ENCODE measurements at regions of chr11 and their contacts with region 1.

Region 1: DNA sequence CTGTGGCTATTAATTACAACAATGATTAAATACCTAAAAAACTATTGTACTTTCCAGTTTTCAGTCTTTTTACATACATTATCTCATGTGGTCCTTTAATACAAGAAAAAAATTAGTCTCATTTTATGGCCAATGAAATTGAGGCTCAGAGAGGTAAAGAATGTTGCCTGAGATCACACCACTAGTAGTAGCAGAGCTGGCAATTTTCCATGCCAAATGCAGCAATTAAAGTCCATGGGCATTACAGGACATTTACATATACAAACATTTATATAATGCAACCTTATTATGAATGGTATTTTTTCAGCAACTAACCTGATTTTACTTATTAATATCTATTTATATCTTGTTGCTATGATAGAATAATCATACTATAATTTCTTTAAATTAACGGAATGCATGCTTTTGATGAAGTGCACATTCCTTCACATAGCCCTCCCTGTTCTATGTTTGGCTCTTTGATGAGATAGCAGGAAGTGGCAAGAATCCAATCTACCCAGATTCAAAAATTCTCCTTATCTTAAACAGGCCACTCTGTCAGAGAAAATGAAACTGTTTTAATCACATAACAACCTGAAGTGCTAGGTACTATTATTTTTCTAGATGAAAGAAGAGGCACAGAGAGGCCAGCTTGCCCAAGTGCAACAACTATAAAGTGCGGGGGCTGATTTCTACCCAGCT is 120.9 kb upstream of the LDLRAD3 start:
- DNase-seq: no peak
- H3K4me3 ChIP-seq: no peak overlapping the region
- H3K4me3 Mint-ChIP-seq: no peak overlapping the region
- H3K27ac Mint-ChIP-seq: no peak overlapping the region
- H3K4me1 ChIP-seq: peaks cover 14% of the 10 kb centered on the region
- H3K4me1 Mint-ChIP-seq: peaks cover 15% of the 10 kb centered on the region
- H3K27me3 ChIP-seq: no peaks in the 10 kb centered on the region
- H3K27me3 Mint-ChIP-seq: no peaks in the 10 kb centered on the region
- CTCF ChIP-seq: no peak

Region 2: GRCh38 chr11:35617687-35618496 is 205.1 kb before region 1 on chr11 and contains the start of gene FJX1:
- CTCF ChIA-PET with region 1: interaction called, 22 read pairs
- POLR2A ChIA-PET with region 1: interaction called, 5 read pairs
- intact Hi-C with region 1: loop called (anchors 1 kb)
- DNase-seq: peak; percentile 69 to 71
- H3K4me3 ChIP-seq: peak within 1 kb of the TSS; percentile 61
- H3K4me3 Mint-ChIP-seq: peak within 1 kb of the TSS; percentile 81
- H3K27ac Mint-ChIP-seq: peak within 1 kb of the TSS; percentile 76
- H3K4me1 ChIP-seq: peaks cover 26% of the 10 kb centered on the region
- H3K4me1 Mint-ChIP-seq: peaks cover 20% of the 10 kb centered on the region
- H3K27me3 ChIP-seq: no peaks in the 10 kb centered on the region
- H3K27me3 Mint-ChIP-seq: peaks cover 2% of the 10 kb centered on the region
- CTCF ChIP-seq: no peak
- total RNA-seq, gene FJX1: 12.0 and 14.4 TPM in 2 replicates

Region 3: GRCh38 chr11:35725880-35726279 is 97.1 kb before region 1 on chr11:
- CTCF ChIA-PET with region 1: no interaction called
- POLR2A ChIA-PET with region 1: no interaction called
- intact Hi-C with region 1: no loop called
- DNase-seq: no peak
- H3K4me3 ChIP-seq: no peak overlapping the region
- H3K4me3 Mint-ChIP-seq: no peak overlapping the region
- H3K27ac Mint-ChIP-seq: no peak overlapping the region
- H3K4me1 ChIP-seq: peaks cover 13% of the 10 kb centered on the region
- H3K4me1 Mint-ChIP-seq: peaks cover 4% of the 10 kb centered on the region
- H3K27me3 ChIP-seq: no peaks in the 10 kb centered on the region
- H3K27me3 Mint-ChIP-seq: no peaks in the 10 kb centered on the region
- CTCF ChIP-seq: no peak

Region 4: DNA sequence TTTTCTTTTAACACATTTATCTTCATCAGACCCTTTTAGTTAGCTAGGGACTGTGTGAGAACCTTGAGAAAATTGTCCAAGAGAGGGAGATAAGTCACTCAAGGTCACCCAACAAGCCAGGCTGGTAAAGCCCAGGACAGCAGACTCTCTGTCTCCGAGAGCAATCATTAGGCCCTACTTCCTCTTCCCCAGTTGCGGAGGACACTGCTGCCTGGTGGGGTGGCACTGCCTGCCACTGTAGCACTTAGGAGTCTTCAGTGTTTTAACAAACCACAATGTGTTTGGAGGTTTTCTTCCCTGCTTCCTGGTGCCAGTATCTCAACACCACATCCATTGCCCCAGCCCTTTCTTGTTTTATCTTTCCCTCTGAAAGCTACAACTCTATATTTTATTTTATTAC is 11.2 kb before region 1 on chr11:
- CTCF ChIA-PET with region 1: interaction called, 19 read pairs
- POLR2A ChIA-PET with region 1: no interaction called
- intact Hi-C with region 1: no loop called
- DNase-seq: no peak
- H3K4me3 ChIP-seq: no peak overlapping the region
- H3K4me3 Mint-ChIP-seq: no peak overlapping the region
- H3K27ac Mint-ChIP-seq: peak overlapping the region; percentile 69
- H3K4me1 ChIP-seq: no peaks in the 10 kb centered on the region
- H3K4me1 Mint-ChIP-seq: no peaks in the 10 kb centered on the region
- H3K27me3 ChIP-seq: no peaks in the 10 kb centered on the region
- H3K27me3 Mint-ChIP-seq: no peaks in the 10 kb centered on the region
- CTCF ChIP-seq: no peak

Region 5: GRCh38 chr11:36056160-36056751 is 233.3 kb after region 1 on chr11:
- CTCF ChIA-PET with region 1: interaction called, 14 read pairs
- POLR2A ChIA-PET with region 1: no interaction called
- intact Hi-C with region 1: loop called (anchors 5 kb)
- DNase-seq: peak in 1 of 2 experiments; percentile 38
- H3K4me3 ChIP-seq: no peak overlapping the region
- H3K4me3 Mint-ChIP-seq: no peak overlapping the region
- H3K27ac Mint-ChIP-seq: no peak overlapping the region
- H3K4me1 ChIP-seq: no peaks in the 10 kb centered on the region
- H3K4me1 Mint-ChIP-seq: no peaks in the 10 kb centered on the region
- H3K27me3 ChIP-seq: no peaks in the 10 kb centered on the region
- H3K27me3 Mint-ChIP-seq: no peaks in the 10 kb centered on the region
- CTCF ChIP-seq: peak; percentile 26 to 70

Region 6: GRCh38 chr11:36079878-36080675 is 257.1 kb after region 1 on chr11:
- CTCF ChIA-PET with region 1: no interaction called
- POLR2A ChIA-PET with region 1: no interaction called
- intact Hi-C with region 1: no loop called
- DNase-seq: no peak
- H3K4me3 ChIP-seq: no peak overlapping the region
- H3K4me3 Mint-ChIP-seq: no peak overlapping the region
- H3K27ac Mint-ChIP-seq: no peak overlapping the region
- H3K4me1 ChIP-seq: peaks cover 4% of the 10 kb centered on the region; the same call in 1 of the 2 replicates
- H3K4me1 Mint-ChIP-seq: no peaks in the 10 kb centered on the region
- H3K27me3 ChIP-seq: no peaks in the 10 kb centered on the region
- H3K27me3 Mint-ChIP-seq: no peaks in the 10 kb centered on the region
- CTCF ChIP-seq: no peak

Region 7: GRCh38 chr11:36149538-36150242 is 326.7 kb after region 1 on chr11:
- CTCF ChIA-PET with region 1: interaction called, 10 read pairs
- POLR2A ChIA-PET with region 1: no interaction called
- intact Hi-C with region 1: loop called (anchors 1 kb)
- DNase-seq: peak; percentile 79 to 87
- H3K4me3 ChIP-seq: no peak overlapping the region
- H3K4me3 Mint-ChIP-seq: peak overlapping the region; percentile 2
- H3K27ac Mint-ChIP-seq: peak overlapping the region; percentile 89
- H3K4me1 ChIP-seq: peaks cover 30% of the 10 kb centered on the region
- H3K4me1 Mint-ChIP-seq: peaks cover 15% of the 10 kb centered on the region
- H3K27me3 ChIP-seq: no peaks in the 10 kb centered on the region
- H3K27me3 Mint-ChIP-seq: no peaks in the 10 kb centered on the region
- CTCF ChIP-seq: peak; percentile 36 to 58

Region 8: GRCh38 chr11:36478700-36479329 is 655.9 kb after region 1 on chr11:
- CTCF ChIA-PET with region 1: interaction called, 11 read pairs
- POLR2A ChIA-PET with region 1: no interaction called
- intact Hi-C with region 1: loop called (anchors 1 kb)
- DNase-seq: peak in 1 of 2 experiments; percentile 57
- H3K4me3 ChIP-seq: no peak overlapping the region
- H3K4me3 Mint-ChIP-seq: no peak overlapping the region
- H3K27ac Mint-ChIP-seq: no peak overlapping the region
- H3K4me1 ChIP-seq: no peaks in the 10 kb centered on the region
- H3K4me1 Mint-ChIP-seq: no peaks in the 10 kb centered on the region
- H3K27me3 ChIP-seq: no peaks in the 10 kb centered on the region
- H3K27me3 Mint-ChIP-seq: no peaks in the 10 kb centered on the region
- CTCF ChIP-seq: peak in 1 of 2 experiments; percentile 74

Measured in Caco-2 (cell line).